Breast epithelium (tissue), 4 donors: ENCODE measurements at regions of chr12 and their contacts with region 1.

Region 1: DNA sequence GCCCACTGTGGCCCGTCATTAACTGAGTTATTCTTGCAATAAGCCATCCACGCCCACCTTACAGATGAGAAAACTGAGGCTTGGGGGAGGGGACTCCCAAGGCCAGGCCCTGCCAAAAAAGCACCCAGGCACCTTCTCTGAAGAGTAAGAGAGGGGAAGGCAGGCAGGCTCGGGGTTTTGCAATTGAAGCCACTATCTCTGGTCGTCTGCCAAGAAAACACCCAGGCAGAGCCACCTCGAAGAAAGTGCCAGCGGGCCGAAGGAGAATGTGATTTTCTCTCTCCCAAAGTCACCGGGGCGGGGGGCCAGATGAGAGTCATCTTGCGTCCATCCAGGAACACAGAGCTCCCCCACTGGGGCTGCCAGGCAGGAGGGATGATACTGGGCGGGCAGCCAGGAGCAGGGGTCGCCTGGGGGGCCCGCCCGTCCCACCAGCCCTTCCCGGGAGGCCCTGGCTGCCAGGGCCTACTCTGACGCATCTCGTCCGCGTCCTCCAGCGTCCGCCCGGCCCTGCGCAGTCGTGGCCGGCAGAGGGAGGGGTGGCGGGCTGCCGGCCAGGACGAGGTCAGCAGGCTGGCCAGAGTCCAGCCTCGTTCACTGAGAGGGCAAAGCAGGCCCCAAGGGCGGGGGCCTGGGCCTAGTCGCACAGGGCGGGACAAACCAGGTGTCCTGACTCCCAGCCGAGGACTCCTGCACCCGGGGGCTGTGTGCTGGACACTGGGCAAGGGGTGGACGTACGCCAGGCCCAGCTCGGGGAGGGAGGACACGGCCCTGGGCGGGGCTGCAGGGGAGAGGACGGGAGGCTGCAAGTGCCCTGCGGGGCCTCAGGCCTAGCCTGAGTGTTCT is 74.4 kb downstream of the RFLNA start:
- DNase-seq: peak; percentile 81 to 90
- H3K4me3 ChIP-seq: peak overlapping the region; percentile 4 to 51 (median 21)
- H3K27ac ChIP-seq: peak overlapping the region; percentile 94 to 95
- H3K4me1 ChIP-seq: peaks cover 16 to 31% of the 10 kb centered on the region in 2 donors
- H3K27me3 ChIP-seq: no peaks in the 10 kb centered on the region
- CTCF ChIP-seq: peak; percentile 40 to 70 (median 59)
- POLR2A ChIP-seq: no peak

Region 2: DNA sequence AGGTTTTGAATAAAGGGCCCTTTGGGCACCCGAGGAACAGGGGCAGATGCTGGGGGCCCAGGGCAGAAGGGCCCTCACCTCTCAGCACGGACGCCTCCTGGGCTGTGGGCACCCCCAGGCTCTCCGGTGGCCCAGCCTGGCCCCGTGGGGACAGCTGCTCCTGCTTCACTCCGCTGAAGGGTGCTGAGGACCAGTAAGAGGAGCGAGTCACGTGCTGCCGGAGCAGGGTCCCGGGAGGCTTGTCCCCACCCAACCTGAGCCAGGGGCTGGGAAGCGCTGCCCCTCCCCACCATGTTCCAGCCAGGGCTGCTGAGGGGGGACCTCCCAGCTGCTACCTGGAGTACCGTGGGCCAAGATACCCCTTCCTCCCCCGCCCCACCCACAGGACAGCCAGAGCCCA is 14.9 kb before region 1 on chr12:
- intact Hi-C with region 1: no loop called
- DNase-seq: no peak
- H3K4me3 ChIP-seq: no peak overlapping the region
- H3K27ac ChIP-seq: peak overlapping the region; percentile 33 to 68
- H3K4me1 ChIP-seq: peaks cover 4 to 8% of the 10 kb centered on the region in 2 donors
- H3K27me3 ChIP-seq: no peaks in the 10 kb centered on the region
- CTCF ChIP-seq: no peak
- POLR2A ChIP-seq: no peak

Region 3: GRCh38 chr12:124480469-124481256 is 111.4 kb after region 1 on chr12:
- intact Hi-C with region 1: loop called (anchors 1 kb)
- DNase-seq: peak; percentile 71 to 72
- H3K4me3 ChIP-seq: peak overlapping the region in 1 of 3 donors; percentile 18
- H3K27ac ChIP-seq: peak overlapping the region; percentile 54 to 80
- H3K4me1 ChIP-seq: peaks cover 0 to 19% of the 10 kb centered on the region in 2 donors
- H3K27me3 ChIP-seq: no peaks in the 10 kb centered on the region
- CTCF ChIP-seq: no peak
- POLR2A ChIP-seq: no peak

Region 4: DNA sequence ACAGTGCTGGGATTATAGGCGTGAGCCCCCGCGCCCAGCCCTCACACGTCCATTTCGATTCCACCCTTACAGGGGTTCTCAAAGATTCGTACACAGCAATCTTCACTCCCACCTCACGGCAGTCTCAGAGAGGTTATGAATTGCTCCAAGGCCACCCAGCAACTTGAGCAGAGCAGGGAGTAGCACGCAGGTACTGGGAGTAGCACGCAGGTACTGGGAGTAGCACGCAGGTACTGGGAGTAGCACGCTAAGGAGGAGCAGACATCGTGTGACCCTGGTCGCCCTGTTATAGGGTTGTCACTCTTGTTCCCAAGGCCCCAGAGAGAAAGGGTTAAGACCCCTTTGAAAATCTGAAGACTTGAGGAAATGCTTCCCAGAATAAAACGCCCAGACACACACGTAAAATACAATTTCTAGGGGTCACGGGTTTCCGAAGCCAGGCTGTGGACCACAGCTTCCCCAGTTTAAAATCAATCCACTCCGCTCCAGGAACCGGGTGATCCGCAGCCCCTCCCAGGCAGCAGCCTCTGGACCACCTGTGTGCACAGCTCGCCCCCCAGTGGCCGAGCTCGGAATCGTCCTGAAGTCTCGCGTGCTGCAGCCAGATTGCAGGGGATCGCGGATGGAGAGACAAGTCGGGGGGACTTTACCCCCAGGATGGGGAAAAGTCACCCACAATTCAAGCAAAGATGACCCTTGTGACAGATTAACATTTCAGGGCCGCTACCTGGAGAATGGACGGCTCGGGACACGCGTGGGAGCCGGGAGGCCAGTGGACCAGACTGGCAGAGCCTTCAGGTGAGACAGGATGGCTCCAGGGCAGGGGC is 402.4 kb after region 1 on chr12:
- intact Hi-C with region 1: loop called (anchors 10 kb)
- DNase-seq: peak; percentile 80 to 82
- H3K4me3 ChIP-seq: no peak overlapping the region
- H3K27ac ChIP-seq: no peak overlapping the region
- H3K4me1 ChIP-seq: peaks cover 0 to under 1% of the 10 kb centered on the region in 2 donors
- H3K27me3 ChIP-seq: no peaks in the 10 kb centered on the region
- CTCF ChIP-seq: peak; percentile 94 to 98 (median 96)
- POLR2A ChIP-seq: no peak